PC-9 (cell line): ENCODE measurements at regions of chr20 and their contacts with region 1.

Region 1: DNA sequence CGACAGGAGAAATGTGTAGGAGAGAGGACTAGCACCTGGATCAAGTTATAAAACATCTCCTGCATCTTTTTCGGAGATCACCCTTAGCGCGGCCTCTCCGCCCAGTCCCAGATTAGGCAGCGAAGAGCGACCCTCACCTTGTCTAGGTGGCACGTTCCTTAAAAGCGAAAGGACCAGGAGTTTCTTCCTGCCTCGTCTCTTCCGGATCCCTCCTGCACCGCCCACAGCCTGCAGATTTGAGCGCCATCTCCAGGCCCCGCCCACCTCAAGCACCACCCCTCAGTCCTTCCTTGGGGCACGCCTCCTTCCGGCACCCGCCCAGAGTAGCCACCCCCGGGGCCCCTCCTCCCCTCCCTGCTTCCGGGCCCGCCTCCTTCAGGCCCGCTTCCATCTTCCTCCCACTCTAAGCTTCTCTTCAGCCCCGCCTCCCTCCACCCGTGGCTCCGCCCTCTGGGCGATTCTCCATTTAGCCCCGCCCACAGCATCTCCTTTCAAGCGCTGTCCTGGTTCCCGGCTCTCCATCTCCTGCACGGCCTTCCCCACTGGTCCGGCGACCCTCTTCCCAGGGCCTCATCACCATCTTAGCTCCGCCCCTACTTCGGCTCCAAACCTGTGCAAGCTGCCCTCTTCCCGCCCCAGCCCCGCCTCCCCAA is 662 bp upstream of the RALY start:
- DNase-seq: peak; percentile 93 to 100
- H3K4me3 ChIP-seq: peak overlapping the region; percentile 92
- H3K27ac ChIP-seq: peak overlapping the region; percentile 86
- H3K4me1 ChIP-seq: peaks cover 28% of the 10 kb centered on the region
- H3K27me3 ChIP-seq: no peaks in the 10 kb centered on the region
- CTCF ChIP-seq: no peak

Region 2: DNA sequence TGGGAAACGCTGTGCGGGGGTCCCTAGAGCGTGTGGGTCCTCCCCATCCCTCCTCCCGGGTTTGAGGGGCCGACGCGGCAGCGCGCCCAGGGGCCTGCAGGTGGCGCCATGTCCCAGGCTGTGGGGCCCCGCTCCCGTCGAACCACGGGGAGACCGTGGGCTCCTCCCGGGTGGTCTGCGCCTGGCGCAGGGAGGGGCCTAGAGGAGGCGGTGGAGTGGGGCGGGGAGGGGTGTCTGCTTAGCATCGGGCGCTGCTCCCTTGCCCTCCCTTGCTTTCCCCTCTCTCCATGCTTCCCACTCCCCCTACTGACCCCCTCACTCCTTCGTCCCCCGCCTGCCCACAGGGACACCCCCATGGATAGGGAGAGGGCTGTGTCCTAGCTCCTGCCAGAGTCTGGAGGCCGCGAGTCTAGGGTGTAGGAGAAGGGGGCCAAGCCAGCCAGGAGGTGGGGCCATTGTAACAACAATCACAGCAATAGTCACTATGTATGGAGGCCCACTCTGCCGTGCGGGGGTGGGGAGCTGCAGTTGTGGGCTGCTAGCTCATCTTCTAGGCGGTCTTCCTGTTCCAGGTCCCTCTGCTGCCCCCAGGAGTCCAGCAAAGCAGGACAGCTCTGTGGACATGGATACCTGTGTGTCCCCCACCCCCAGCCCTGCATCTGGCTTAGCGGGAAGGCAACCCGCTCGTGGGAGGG is 130.2 kb before region 1 on chr20:
- CTCF ChIA-PET with region 1: no interaction called
- POLR2A ChIA-PET with region 1: interaction called, 11 read pairs
- intact Hi-C with region 1: no loop called
- DNase-seq: peak in 1 of 2 experiments; percentile 21
- H3K4me3 ChIP-seq: no peak overlapping the region
- H3K27ac ChIP-seq: no peak overlapping the region
- H3K4me1 ChIP-seq: peaks cover 22% of the 10 kb centered on the region
- H3K27me3 ChIP-seq: no peaks in the 10 kb centered on the region
- CTCF ChIP-seq: peak; percentile 58

Region 3: GRCh38 chr20:34016736-34017135 is 23.7 kb after region 1 on chr20:
- CTCF ChIA-PET with region 1: no interaction called
- POLR2A ChIA-PET with region 1: no interaction called
- intact Hi-C with region 1: no loop called
- DNase-seq: no peak
- H3K4me3 ChIP-seq: no peak overlapping the region
- H3K27ac ChIP-seq: no peak overlapping the region
- H3K4me1 ChIP-seq: no peaks in the 10 kb centered on the region
- H3K27me3 ChIP-seq: no peaks in the 10 kb centered on the region
- CTCF ChIP-seq: no peak

Region 4: DNA sequence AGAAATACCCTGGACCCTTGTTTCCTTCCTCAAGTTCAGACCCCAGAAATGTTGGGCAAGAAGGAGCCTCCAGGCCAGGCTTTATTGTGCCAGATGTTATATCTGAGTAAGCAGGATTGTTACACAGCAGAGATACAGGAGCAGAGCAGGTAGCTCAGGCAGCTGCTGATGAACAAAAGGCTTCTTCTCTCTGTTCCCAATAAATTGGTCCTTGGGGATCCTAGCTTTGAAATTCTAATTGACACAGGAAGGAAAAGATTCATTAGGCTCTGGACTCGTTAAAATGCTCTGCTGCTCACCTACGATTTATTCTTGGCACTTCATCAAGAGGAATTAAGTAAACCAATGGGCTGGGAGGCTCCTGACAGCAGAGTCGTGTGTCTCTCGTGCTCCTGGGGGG is 54.9 kb after region 1 on chr20:
- CTCF ChIA-PET with region 1: no interaction called
- POLR2A ChIA-PET with region 1: interaction called, 21 read pairs
- intact Hi-C with region 1: no loop called
- DNase-seq: no peak
- H3K4me3 ChIP-seq: no peak overlapping the region
- H3K27ac ChIP-seq: no peak overlapping the region
- H3K4me1 ChIP-seq: no peaks in the 10 kb centered on the region
- H3K27me3 ChIP-seq: no peaks in the 10 kb centered on the region
- CTCF ChIP-seq: no peak

Region 5: DNA sequence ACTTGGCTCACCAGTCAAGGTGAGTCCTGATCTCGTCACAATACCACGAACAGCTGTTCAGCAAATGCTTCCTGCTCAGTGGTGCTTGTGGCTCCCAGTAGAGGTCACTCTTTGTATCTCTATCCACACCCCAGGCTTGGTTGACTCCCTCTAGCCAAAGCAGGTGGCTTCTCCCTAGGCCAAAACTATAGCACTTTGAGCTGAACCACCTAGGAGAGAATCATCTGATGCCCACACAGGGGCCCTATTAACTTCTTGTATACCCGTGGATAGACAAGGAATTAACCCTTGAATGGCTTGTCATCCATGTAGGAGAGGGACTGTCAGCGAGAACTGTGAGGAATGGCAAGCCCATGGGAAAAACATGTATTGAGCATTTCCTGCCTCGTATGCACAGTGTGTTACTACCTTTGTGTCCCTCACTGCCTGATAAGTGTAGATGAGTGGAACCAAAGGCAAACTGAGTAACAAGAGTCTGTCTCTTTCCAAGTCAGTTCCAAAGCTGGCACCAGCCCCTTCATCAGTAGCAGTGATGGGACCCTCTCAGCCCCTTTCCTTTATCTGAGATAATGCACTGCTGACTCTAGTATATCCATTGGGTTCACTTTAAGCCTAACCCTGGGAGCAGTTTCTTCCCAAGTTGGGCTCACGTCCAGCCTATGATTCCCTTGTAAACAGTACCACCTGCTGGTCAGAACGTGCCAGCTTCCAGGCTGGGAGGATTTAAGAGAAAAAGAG is 76.5 kb after region 1 on chr20:
- CTCF ChIA-PET with region 1: no interaction called
- POLR2A ChIA-PET with region 1: interaction called, 6 read pairs
- intact Hi-C with region 1: loop called (anchors 2 kb)
- DNase-seq: peak; percentile 70 to 75
- H3K4me3 ChIP-seq: no peak overlapping the region
- H3K27ac ChIP-seq: 0 out of 2 replicates have a peak overlapping the region, but pooled peaks have one; percentile 33
- H3K4me1 ChIP-seq: peaks cover 13% of the 10 kb centered on the region; the same call in 1 of the 2 replicates
- H3K27me3 ChIP-seq: no peaks in the 10 kb centered on the region
- CTCF ChIP-seq: peak; percentile 89

Region 6: DNA sequence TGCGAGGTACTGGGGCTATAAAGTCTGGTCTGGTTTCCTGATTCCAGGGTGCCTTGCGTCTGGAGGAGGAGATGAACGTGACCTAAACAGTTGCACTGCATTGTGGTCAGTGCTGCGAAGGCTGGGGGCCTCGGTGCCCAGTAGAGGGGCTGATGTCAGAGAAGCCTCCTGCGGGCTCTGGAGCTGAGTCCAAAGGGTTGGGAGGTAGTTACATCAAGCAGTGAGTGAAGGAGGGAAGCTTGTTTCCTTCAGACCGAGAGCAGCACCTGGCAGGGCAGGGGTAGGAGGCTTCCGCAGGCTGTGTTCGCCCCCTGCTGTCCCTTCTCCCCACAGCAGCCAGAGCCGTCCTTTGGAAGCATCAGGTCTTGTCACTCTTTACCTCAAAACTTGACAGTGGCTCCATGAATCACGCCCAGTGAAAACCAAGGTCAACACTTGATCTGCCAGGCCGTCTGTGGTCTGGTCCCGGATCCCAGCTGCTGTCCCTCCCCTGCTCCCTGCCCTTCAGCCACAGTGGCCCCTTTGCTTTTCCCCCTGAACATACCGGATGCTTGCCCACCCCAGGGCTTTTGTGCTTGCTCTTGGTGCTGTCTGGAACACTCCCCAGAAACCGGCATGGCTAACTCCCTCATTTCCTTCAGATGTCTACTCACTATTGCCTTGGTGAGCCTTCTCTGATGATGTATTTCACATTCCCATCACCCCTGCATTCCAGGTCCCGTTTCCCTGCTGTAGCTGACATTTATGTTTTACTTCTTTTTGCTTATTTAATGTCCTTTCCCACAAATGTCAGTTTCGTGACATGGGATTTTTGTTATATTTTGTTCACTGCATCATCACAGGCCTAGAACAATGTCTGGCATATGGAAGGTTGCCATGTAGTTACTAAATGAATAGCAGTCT is 530.2 kb after region 1 on chr20:
- CTCF ChIA-PET with region 1: no interaction called
- POLR2A ChIA-PET with region 1: no interaction called
- intact Hi-C with region 1: no loop called
- DNase-seq: peak; percentile 44 to 55
- H3K4me3 ChIP-seq: no peak overlapping the region
- H3K27ac ChIP-seq: no peak overlapping the region
- H3K4me1 ChIP-seq: peaks cover 37% of the 10 kb centered on the region
- H3K27me3 ChIP-seq: no peaks in the 10 kb centered on the region
- CTCF ChIP-seq: peak; percentile 57